ENCODE measurements at regions of chr1 and their contacts with region 1.

Region 1: DNA sequence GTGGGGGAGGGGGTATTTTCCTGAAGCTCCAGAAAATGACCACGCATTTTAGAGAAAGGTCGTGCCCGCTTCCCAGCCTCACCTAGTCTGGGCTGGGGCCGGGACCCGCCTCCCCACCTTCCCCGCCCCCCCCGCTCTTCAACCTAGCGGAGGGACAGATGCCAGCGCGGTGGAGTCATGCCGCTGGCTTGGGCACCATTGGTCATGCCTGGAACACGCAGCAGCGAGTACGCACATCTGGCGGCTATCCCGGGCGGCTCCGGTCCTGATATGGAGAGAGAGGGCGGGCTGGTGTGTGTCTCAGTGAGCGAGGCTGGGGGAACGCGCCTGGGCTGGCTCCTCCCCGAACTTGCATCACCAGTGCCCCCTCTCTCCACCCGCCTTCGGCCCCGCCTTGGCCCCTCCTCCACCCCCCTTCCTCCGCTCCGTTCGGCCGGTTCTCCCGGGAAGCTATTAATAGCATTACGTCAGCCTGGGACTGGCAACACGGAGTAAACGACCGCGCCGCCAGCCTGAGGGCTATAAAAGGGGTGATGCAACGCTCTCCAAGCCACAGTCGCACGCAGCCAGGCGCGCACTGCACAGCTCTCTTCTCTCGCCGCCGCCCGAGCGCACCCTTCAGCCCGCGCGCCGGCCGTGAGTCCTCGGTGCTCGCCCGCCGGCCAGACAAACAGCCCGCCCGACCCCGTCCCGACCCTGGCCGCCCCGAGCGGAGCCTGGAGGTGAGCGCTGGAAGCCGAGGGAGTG is at the start of gene ATF3:
- DNase-seq: peak; percentile 98 to 99
- H3K4me3 ChIP-seq: peak within 1 kb of the TSS; percentile 81
- H3K4me3 Mint-ChIP-seq: peak within 1 kb of the TSS; percentile 91
- H3K27ac Mint-ChIP-seq: peak within 1 kb of the TSS; percentile 83
- H3K4me1 ChIP-seq: peaks cover 28% of the 10 kb centered on the region
- H3K4me1 Mint-ChIP-seq: peaks cover 34% of the 10 kb centered on the region
- H3K27me3 ChIP-seq: peaks cover 4% of the 10 kb centered on the region; the same call in 1 of the 2 replicates
- H3K27me3 Mint-ChIP-seq: no peaks in the 10 kb centered on the region
- CTCF ChIP-seq: no peak
- total RNA-seq, gene ATF3: 21.8 and 25.8 TPM in 2 replicates

Region 2: DNA sequence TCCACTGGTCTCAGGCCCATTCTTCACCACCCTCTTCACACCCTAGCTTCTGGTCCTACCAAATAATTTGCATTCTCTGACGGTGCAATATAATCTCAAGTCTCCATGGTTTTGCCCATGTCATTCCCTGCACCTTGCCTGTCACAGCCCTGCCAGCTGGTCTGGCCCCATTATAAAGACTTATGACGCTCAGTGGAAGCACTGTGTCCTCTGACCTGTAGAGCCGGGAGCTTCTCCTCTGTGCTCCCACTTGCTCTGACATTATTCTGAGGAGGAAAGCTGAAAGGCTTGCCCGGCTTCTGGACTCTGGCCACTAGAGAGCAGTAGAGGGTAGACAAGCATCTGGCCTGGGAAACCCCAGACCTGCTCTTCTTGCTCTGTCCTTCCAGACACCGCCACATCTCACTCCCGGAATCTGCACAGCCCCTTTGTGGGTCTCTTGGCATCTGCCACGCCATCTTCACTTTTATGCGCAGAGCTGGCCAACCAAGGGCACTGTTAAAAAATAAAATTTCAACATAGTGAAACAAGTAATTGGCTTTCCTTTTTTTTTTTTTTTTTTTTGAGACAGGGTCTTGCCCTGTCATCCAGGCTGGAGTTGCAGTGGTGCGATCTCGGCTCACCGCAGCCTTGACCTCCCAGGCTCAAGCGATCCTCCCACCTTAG is 131.2 kb before region 1 on chr1:
- CTCF ChIA-PET with region 1: interaction called, 23 read pairs
- POLR2A ChIA-PET with region 1: interaction called, 9 read pairs
- intact Hi-C with region 1: loop called (anchors 1 kb)
- DNase-seq: peak; percentile 88 to 91
- H3K4me3 ChIP-seq: no peak overlapping the region
- H3K4me3 Mint-ChIP-seq: no peak overlapping the region
- H3K27ac Mint-ChIP-seq: no peak overlapping the region
- H3K4me1 ChIP-seq: peaks cover 5% of the 10 kb centered on the region
- H3K4me1 Mint-ChIP-seq: peaks cover 7% of the 10 kb centered on the region
- H3K27me3 ChIP-seq: no peaks in the 10 kb centered on the region
- H3K27me3 Mint-ChIP-seq: no peaks in the 10 kb centered on the region
- CTCF ChIP-seq: peak; percentile 94 to 95

Region 3: DNA sequence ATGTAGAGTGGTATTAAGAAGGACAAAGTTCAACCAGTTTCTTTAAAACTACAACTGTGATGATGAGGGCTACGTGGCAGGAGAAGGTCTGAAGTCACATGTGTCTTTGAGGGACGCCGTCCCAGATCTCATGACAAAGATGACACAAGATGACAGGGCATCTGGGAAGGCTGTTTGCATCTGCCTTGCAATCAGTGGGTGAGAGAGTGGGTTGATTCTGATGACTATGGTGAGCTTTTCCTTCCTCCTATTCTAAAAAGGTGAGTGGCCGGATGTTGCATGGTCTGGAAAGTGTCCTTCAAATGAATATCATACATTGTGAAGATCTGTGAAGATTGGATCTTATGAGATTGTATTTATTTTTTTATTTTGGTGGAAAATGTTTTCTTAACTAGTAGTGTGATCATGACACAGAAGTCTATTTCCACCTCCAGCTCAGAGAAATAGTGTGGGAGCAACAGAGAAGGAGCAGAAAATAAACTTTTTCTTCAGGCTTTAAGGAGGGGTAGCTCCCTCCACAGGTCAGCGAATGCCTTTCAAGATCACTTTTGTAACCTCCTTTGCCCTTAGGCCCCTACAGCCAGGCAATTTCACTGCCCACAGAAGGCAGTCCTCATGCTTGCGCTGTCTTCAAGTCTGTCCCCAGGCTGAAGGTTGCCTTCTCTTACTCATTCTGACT is 75.8 kb before region 1 on chr1:
- CTCF ChIA-PET with region 1: no interaction called
- POLR2A ChIA-PET with region 1: no interaction called
- intact Hi-C with region 1: no loop called
- DNase-seq: no peak
- H3K4me3 ChIP-seq: no peak overlapping the region
- H3K4me3 Mint-ChIP-seq: no peak overlapping the region
- H3K27ac Mint-ChIP-seq: no peak overlapping the region
- H3K4me1 ChIP-seq: no peaks in the 10 kb centered on the region
- H3K4me1 Mint-ChIP-seq: no peaks in the 10 kb centered on the region
- H3K27me3 ChIP-seq: no peaks in the 10 kb centered on the region
- H3K27me3 Mint-ChIP-seq: peaks cover 14% of the 10 kb centered on the region
- CTCF ChIP-seq: no peak

Region 4: GRCh38 chr1:212558693-212559480 is 49.5 kb before region 1 on chr1:
- CTCF ChIA-PET with region 1: interaction called, 8 read pairs
- POLR2A ChIA-PET with region 1: interaction called, 22 read pairs
- intact Hi-C with region 1: loop called (anchors 1 kb)
- DNase-seq: peak; percentile 90 to 94
- H3K4me3 ChIP-seq: peak overlapping the region; percentile 93
- H3K4me3 Mint-ChIP-seq: peak overlapping the region; percentile 78
- H3K27ac Mint-ChIP-seq: peak overlapping the region; percentile 95
- H3K4me1 ChIP-seq: peaks cover 12% of the 10 kb centered on the region; the same call in 1 of the 2 replicates
- H3K4me1 Mint-ChIP-seq: peaks cover 7% of the 10 kb centered on the region
- H3K27me3 ChIP-seq: no peaks in the 10 kb centered on the region
- H3K27me3 Mint-ChIP-seq: no peaks in the 10 kb centered on the region
- CTCF ChIP-seq: peak in 1 of 2 experiments; percentile 7

Region 5: DNA sequence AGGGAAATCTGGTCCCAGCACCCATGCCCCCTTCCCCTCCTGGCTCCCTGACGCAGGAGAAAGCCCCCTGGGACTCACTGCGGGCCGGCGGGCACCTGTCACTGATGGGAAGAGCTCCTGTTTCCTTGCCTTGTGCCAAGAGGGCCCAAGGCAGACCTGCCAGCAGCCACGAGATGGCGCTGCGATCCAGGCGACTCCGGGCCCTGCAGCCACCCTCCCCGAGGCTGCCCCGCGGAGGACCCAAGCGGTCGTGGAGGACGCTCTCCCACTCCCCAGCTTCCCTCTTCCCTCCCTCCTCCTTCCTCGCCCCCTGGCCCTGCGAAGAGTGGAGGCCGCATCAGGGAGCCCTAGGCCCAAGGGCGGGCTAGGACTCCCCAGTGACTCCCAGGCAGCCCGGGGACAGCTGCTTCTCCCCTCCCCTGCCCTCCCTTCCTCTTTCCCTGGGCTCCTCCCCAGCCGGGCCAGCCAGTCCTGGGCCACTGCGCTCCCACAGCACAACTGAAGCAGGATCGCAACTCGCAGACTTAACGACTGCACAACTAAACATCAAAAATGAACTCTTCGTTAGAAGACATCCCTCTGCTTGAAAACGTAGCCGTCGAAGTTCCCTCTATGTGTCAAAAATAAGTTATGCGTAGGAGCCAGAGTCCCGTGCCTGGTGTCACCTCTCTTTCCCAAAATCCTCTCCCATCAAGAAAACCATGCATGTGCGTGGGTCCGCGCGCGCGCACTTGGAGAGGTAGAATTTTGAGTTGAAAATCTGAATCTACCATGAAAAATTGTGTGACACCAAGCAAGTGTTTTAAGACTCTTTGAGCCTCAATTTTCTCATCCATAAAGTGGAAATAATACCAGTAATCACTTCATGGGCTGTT is 57.1 kb after region 1 on chr1:
- CTCF ChIA-PET with region 1: interaction called, 14 read pairs
- POLR2A ChIA-PET with region 1: interaction called, 13 read pairs
- intact Hi-C with region 1: loop called (anchors 5 kb)
- DNase-seq: peak; percentile 76 to 90
- H3K4me3 ChIP-seq: peak overlapping the region; percentile 89
- H3K4me3 Mint-ChIP-seq: peak overlapping the region; percentile 74
- H3K27ac Mint-ChIP-seq: peak overlapping the region; percentile 35
- H3K4me1 ChIP-seq: no peaks in the 10 kb centered on the region
- H3K4me1 Mint-ChIP-seq: peaks cover 6% of the 10 kb centered on the region
- H3K27me3 ChIP-seq: no peaks in the 10 kb centered on the region
- H3K27me3 Mint-ChIP-seq: peaks cover 12% of the 10 kb centered on the region
- CTCF ChIP-seq: peak; percentile 94 to 98

Region 6: DNA sequence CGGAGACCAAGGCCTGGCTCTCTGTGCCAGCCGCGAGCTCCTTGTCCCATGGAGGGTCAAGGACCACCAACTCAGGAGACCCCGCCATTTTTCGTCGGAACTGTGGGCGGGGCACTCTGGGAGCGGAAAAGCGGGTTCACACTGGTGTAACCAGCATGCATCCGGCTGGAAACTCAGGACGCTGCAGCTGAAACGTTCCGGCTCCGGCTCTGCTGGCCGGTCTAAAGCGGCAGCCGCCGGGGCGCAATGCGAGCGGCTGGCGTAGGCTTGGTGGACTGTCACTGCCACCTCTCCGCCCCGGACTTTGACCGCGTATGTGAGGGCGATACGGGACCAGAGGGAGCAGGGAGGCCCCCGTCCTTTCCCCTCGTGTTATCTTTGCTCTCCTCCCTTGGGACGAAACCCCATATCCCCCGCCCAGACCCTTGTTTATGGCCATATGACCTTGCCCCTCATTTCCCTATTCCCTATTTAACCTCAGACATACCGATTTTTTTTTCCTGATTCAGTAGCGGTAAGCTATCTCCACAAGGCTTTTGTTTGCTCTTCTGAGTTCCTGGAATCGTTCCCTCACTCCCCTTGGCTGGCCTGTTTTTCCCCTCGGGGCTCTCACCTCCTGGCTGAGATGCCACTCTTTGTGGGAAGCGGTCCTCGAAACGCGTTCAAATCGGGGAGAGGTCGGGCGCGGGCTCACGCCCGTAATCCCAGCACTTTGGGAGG is 183.5 kb after region 1 on chr1 and contains the starts of genes NSL1 and TATDN3:
- CTCF ChIA-PET with region 1: no interaction called
- POLR2A ChIA-PET with region 1: interaction called, 5 read pairs
- intact Hi-C with region 1: loop called (anchors 5 kb)
- DNase-seq: peak; percentile 97 to 99
- H3K4me3 ChIP-seq: peak within 1 kb of the TSS; percentile 88
- H3K4me3 Mint-ChIP-seq: peak within 1 kb of the TSS; percentile 94
- H3K27ac Mint-ChIP-seq: peak within 1 kb of the TSS; percentile 97
- H3K4me1 ChIP-seq: peaks cover 16% of the 10 kb centered on the region
- H3K4me1 Mint-ChIP-seq: peaks cover 25% of the 10 kb centered on the region
- H3K27me3 ChIP-seq: no peaks in the 10 kb centered on the region
- H3K27me3 Mint-ChIP-seq: no peaks in the 10 kb centered on the region
- CTCF ChIP-seq: no peak
- total RNA-seq, gene NSL1: 35.9 and 45.6 TPM in 2 replicates
- total RNA-seq, gene TATDN3: 9.6 and 12.4 TPM in 2 replicates

Region 7: DNA sequence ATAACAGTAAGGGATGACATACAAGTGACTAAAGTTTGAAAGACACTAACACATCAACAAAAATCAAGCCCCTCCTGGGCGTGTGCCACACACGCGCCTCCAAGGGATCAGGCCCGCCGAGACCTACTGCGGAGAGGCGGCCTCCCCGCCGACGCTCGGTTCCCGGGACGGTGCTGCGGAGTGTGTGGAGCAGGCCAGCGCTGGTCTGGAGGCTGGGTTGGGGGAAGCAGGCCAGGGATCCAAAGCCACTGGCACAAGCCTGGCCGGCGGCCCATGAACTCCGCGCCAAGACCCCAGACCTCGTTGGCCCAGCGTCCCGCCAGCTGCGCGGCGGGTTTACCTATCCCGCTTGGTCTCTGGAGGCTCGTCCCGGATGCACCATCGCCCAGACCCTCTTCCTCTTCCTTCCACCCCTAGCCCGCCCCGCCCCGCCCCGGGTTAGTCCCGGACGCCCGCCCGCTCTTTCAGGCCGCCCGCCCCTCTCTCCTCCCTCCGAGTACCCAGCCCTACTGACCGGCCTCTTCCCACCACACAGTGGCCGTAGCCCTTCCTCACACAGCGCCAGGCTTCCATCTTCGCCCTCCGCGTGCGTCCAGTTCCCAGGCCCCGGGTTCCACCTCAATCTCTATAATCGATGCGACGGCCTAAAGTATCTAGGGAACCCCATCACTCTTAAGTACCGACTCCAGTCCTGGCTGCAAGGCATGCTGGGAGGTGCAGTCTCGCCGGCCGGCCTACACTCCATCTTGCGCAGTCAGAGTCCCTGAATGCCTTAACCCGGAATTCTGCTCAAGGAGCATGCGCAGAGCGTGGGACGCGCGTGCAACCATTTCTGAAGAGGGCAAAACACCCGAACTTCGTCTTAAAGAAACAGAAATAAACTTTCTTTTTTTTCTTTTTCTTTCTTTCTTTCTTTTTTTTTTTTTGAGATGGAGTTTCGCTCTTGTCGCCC is 407.0 kb after region 1 on chr1 and contains the start of gene ANGEL2:
- CTCF ChIA-PET with region 1: no interaction called
- POLR2A ChIA-PET with region 1: no interaction called
- intact Hi-C with region 1: loop called (anchors 10 kb)
- DNase-seq: peak; percentile 95 to 97
- H3K4me3 ChIP-seq: peak within 1 kb of the TSS; percentile 87
- H3K4me3 Mint-ChIP-seq: peak within 1 kb of the TSS; percentile 95
- H3K27ac Mint-ChIP-seq: peak within 1 kb of the TSS; percentile 87
- H3K4me1 ChIP-seq: peaks cover 3% of the 10 kb centered on the region; the same call in 1 of the 2 replicates
- H3K4me1 Mint-ChIP-seq: no peaks in the 10 kb centered on the region
- H3K27me3 ChIP-seq: no peaks in the 10 kb centered on the region
- H3K27me3 Mint-ChIP-seq: no peaks in the 10 kb centered on the region
- CTCF ChIP-seq: no peak
- total RNA-seq, gene ANGEL2: 33.8 and 34.8 TPM in 2 replicates